A549 (cell line): ENCODE measurements at regions of chr1 and their contacts with region 1.

Region 1: GRCh38 chr1:229227298-229227919 is 43.5 kb upstream of the RAB4A start:
- DNase-seq: peak; percentile 81 to 89
- ATAC-seq: peak; percentile 62 to 78
- H3K4me3 ChIP-seq: no peak overlapping the region
- H3K27ac ChIP-seq: peak overlapping the region; percentile 43 to 52; a peak in 5 of 6 replicates
- H3K4me1 ChIP-seq: peaks cover 81% of the 10 kb centered on the region
- CTCF ChIP-seq: peak; percentile 97
- EP300 ChIP-seq: no peak
- POLR2A ChIP-seq: no peak
- RAD21 ChIP-seq: peak; percentile 95 to 98

Region 2: DNA sequence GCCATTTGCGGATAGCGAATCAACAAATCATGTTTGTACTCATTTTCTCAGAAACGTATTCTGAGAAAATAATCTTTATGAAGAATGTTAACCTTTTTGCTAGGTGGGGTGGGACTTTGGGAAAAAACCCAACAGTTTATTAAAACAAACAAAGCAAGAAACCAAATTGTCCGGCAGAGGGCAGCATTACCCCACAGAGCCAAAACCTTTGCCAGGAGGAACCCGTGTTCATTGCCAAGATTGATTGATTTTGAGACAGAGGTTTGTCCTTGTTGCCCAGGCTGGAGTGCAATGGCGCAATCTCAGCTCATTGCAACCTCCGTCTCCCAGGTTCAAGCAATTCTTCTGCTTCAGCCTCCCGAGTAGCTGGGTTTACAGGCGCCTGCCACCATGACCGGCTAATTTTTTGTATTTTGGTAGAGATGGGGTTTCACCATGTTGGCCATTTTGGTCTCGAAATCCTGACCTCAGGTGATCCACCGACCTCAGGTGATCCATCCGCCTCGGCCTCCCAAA is 563.0 kb before region 1 on chr1:
- CTCF ChIA-PET with region 1: interaction called, 27 read pairs
- POLR2A ChIA-PET with region 1: no interaction called
- DNase-seq: peak; percentile 75 to 84
- ATAC-seq: peak; percentile 81 to 90
- H3K4me3 ChIP-seq: peak overlapping the region; percentile 39
- H3K27ac ChIP-seq: peak overlapping the region; percentile 48 to 68; a peak in 3 of 6 replicates
- H3K4me1 ChIP-seq: no peaks in the 10 kb centered on the region
- CTCF ChIP-seq: peak; percentile 94
- EP300 ChIP-seq: no peak
- POLR2A ChIP-seq: no peak
- RAD21 ChIP-seq: peak; percentile 96 to 97

Region 3: GRCh38 chr1:228702433-228702832 is 525.0 kb before region 1 on chr1:
- CTCF ChIA-PET with region 1: interaction called, 99 read pairs
- POLR2A ChIA-PET with region 1: no interaction called
- DNase-seq: no peak
- ATAC-seq: no peak
- H3K4me3 ChIP-seq: no peak overlapping the region
- H3K27ac ChIP-seq: no peak overlapping the region
- H3K4me1 ChIP-seq: no peaks in the 10 kb centered on the region
- CTCF ChIP-seq: no peak
- EP300 ChIP-seq: no peak
- POLR2A ChIP-seq: no peak
- RAD21 ChIP-seq: no peak

Region 4: DNA sequence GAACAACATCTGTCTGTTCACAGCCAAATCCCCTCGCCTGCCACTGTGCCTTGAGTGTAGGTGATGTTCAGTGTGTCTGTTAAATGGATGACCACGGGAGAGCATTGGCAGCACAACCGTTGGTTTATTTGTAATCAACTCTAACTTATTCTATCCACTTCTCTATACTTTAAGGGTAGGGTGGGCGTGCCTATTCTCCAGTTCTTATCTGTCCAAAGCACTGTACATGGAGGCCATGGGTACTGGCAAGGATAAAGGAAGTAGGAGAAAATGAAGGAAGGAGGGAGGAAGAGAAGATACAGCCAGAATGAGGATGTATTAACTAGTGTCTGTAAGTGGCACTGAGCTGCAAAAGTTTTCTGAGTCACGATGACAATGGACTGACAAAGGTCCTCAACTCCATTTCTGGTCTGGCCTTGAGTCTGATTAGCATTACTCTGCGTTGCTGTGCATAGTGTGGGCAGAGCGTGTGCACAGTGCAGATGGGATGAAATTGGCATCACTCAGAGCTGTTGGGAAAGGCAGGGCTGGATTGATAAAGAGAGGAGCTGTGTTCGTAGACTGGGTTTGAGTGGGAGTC is 485.0 kb before region 1 on chr1:
- CTCF ChIA-PET with region 1: interaction called, 30 read pairs
- POLR2A ChIA-PET with region 1: no interaction called
- DNase-seq: no peak
- ATAC-seq: no peak
- H3K4me3 ChIP-seq: no peak overlapping the region
- H3K27ac ChIP-seq: no peak overlapping the region
- H3K4me1 ChIP-seq: peaks cover 6% of the 10 kb centered on the region; the same call in 2 of the 3 replicates
- CTCF ChIP-seq: no peak
- EP300 ChIP-seq: no peak
- POLR2A ChIP-seq: no peak
- RAD21 ChIP-seq: no peak

Region 5: GRCh38 chr1:229028987-229029878 is 198.2 kb before region 1 on chr1:
- CTCF ChIA-PET with region 1: interaction called, 10 read pairs
- POLR2A ChIA-PET with region 1: no interaction called
- DNase-seq: peak in 1 of 2 experiments; percentile 10
- ATAC-seq: no peak
- H3K4me3 ChIP-seq: no peak overlapping the region
- H3K27ac ChIP-seq: no peak overlapping the region
- H3K4me1 ChIP-seq: peaks cover 21% of the 10 kb centered on the region
- CTCF ChIP-seq: no peak
- EP300 ChIP-seq: no peak
- POLR2A ChIP-seq: no peak
- RAD21 ChIP-seq: no peak

Region 6: GRCh38 chr1:229117664-229118300 is 109.6 kb before region 1 on chr1:
- CTCF ChIA-PET with region 1: interaction called, 10 read pairs
- POLR2A ChIA-PET with region 1: no interaction called
- DNase-seq: peak in 1 of 2 experiments; percentile 47
- ATAC-seq: peak in 1 of 2 experiments; percentile 31; a peak in 3 of 6 replicates
- H3K4me3 ChIP-seq: no peak overlapping the region
- H3K27ac ChIP-seq: peak overlapping the region; percentile 51 to 74
- H3K4me1 ChIP-seq: peaks cover 40% of the 10 kb centered on the region
- CTCF ChIP-seq: no peak
- EP300 ChIP-seq: no peak
- POLR2A ChIP-seq: no peak
- RAD21 ChIP-seq: no peak

Region 7: DNA sequence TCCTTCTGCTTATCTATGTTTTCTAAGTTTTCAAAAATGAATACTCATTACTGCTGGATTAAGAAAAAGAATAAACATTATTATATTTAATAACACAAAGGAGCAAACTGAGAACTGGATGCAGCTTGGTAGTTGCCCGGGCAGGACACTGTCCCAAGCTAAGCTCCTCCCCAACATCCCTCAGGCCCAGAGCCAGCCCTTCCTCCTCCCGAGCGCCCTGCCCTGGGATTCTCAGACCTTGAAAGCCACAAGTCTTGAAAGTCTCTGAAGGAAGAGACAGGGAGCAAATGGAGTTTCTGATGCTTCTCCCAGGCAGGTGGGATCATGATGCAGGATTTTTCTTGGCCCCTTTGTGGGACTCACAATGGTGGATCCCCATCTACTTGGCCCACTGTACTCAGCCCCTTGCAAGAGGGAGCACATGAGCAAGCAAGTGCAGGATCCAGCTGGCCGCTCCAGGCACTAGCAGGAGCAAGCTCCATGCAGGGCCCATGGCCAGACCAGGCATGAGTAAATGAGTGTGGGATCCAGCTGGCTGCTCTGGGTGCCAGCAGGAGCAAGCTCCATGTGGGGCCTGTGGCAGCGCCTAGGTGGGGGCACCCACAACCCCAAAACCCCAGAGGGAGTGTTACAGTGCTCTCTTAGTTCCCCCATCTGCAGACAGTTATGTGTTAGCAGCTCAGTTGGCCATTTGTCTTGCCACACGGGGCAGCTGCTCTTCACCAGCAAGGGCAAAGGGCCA is 11.4 kb after region 1 on chr1:
- CTCF ChIA-PET with region 1: interaction called, 14 read pairs
- POLR2A ChIA-PET with region 1: no interaction called
- DNase-seq: no peak
- ATAC-seq: peak; percentile 50 to 63; a peak in 2 of 6 replicates
- H3K4me3 ChIP-seq: no peak overlapping the region
- H3K27ac ChIP-seq: peak overlapping the region; percentile 59 to 77
- H3K4me1 ChIP-seq: peaks cover 11% of the 10 kb centered on the region
- CTCF ChIP-seq: no peak
- EP300 ChIP-seq: no peak
- POLR2A ChIP-seq: no peak
- RAD21 ChIP-seq: no peak